Caco-2 (cell line): ENCODE measurements at regions of chr11 and their contacts with region 1.

Region 1: GRCh38 chr11:64240394-64241174 is at the start of gene FKBP2:
- DNase-seq: peak; percentile 97 to 99
- H3K4me3 ChIP-seq: peak within 1 kb of the TSS; percentile 95
- H3K4me3 Mint-ChIP-seq: peak within 1 kb of the TSS; percentile 88
- H3K27ac Mint-ChIP-seq: peak within 1 kb of the TSS; percentile 90
- H3K4me1 ChIP-seq: peaks cover 20% of the 10 kb centered on the region
- H3K4me1 Mint-ChIP-seq: peaks cover 15% of the 10 kb centered on the region
- H3K27me3 ChIP-seq: no peaks in the 10 kb centered on the region
- H3K27me3 Mint-ChIP-seq: no peaks in the 10 kb centered on the region
- CTCF ChIP-seq: no peak
- total RNA-seq, gene FKBP2: 70.2 and 76.8 TPM in 2 replicates

Region 2: GRCh38 chr11:63916837-63917691 is 323.5 kb before region 1 on chr11 and contains the start of gene RCOR2:
- CTCF ChIA-PET with region 1: no interaction called
- POLR2A ChIA-PET with region 1: no interaction called
- intact Hi-C with region 1: no loop called
- DNase-seq: peak; percentile 79 to 83
- H3K4me3 ChIP-seq: peak within 1 kb of the TSS; percentile 67
- H3K4me3 Mint-ChIP-seq: peak within 1 kb of the TSS; percentile 88
- H3K27ac Mint-ChIP-seq: no peak within 1 kb of the TSS
- H3K4me1 ChIP-seq: 0 out of 2 replicates have a peak, but pooled peaks cover 12% of the 10 kb centered on the region
- H3K4me1 Mint-ChIP-seq: no peaks in the 10 kb centered on the region
- H3K27me3 ChIP-seq: no peaks in the 10 kb centered on the region
- H3K27me3 Mint-ChIP-seq: no peaks in the 10 kb centered on the region
- CTCF ChIP-seq: no peak
- total RNA-seq, gene RCOR2: 1.5 and 1.8 TPM in 2 replicates

Region 3: GRCh38 chr11:64225612-64226506 is 14.7 kb before region 1 on chr11 and contains the starts of genes NUDT22 and TRPT1:
- CTCF ChIA-PET with region 1: interaction called, 8 read pairs
- POLR2A ChIA-PET with region 1: interaction called, 11 read pairs
- intact Hi-C with region 1: no loop called
- DNase-seq: peak; percentile 82 to 92
- H3K4me3 ChIP-seq: peak within 1 kb of the TSS; percentile 99
- H3K4me3 Mint-ChIP-seq: peak within 1 kb of the TSS; percentile 81
- H3K27ac Mint-ChIP-seq: peak within 1 kb of the TSS; percentile 39
- H3K4me1 ChIP-seq: peaks cover 26% of the 10 kb centered on the region
- H3K4me1 Mint-ChIP-seq: no peaks in the 10 kb centered on the region
- H3K27me3 ChIP-seq: no peaks in the 10 kb centered on the region
- H3K27me3 Mint-ChIP-seq: no peaks in the 10 kb centered on the region
- CTCF ChIP-seq: peak; percentile 28 to 29
- total RNA-seq, gene NUDT22: 31.9 and 33.4 TPM in 2 replicates
- total RNA-seq, gene TRPT1: 32.1 and 36.8 TPM in 2 replicates

Region 4: GRCh38 chr11:64263021-64263946 is 22.7 kb after region 1 on chr11:
- CTCF ChIA-PET with region 1: no interaction called
- POLR2A ChIA-PET with region 1: no interaction called
- intact Hi-C with region 1: no loop called
- DNase-seq: peak in 1 of 2 experiments; percentile 28
- H3K4me3 ChIP-seq: no peak overlapping the region
- H3K4me3 Mint-ChIP-seq: no peak overlapping the region
- H3K27ac Mint-ChIP-seq: no peak overlapping the region
- H3K4me1 ChIP-seq: peaks cover 7% of the 10 kb centered on the region
- H3K4me1 Mint-ChIP-seq: peaks cover 16% of the 10 kb centered on the region
- H3K27me3 ChIP-seq: no peaks in the 10 kb centered on the region
- H3K27me3 Mint-ChIP-seq: no peaks in the 10 kb centered on the region
- CTCF ChIP-seq: no peak